Activated T-helper 2 cell treated with anti-CD3 and anti-CD28 coated beads, Interferon-gamma antibody, Interleukin-2, Interleukin-4, amounts not matched to agents 10 μg/mL and 5 μg/mL and 100 μg/mL, durations not matched to agents 14 hours and 24 hours and 36 hours (primary cell): ENCODE measurements at regions of chr7 and their contacts with region 1.

Region 1: DNA sequence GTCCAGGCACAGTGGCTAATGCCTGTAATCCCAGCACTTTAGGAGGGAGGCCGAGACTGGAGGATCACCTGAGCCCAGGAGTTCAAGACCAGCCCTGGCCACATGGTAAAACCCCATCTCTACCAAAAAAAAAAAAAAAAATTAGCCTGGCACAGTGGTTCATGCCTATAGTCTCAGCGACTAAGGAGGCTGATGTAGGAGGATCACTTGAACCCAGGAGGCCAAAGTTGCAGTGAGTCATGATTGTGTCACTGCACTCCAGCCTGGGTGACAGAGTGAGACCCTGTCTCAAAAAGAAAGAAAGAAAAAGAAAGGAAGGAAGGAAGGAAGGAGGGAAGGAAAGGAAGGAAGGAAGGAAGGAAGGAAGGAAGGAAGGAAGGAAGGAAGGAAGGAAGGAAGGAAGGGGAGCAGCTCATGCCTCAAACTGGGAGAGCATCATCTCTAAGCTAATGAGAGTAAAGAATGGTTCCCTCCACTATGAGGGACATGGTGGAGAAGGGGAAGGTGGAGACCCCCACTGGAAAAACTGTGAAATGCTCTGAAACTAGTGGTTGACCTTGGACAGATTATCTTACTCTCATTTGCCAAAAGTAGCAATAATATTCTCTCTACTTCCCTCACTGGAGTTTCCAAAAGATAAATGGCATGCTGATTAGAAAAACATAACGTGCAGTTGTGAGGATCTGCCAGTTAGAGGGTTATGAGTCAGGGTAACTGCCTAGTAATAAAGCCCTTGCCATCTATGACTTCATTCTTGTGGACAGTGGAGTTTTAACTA is 16.8 kb downstream of the GIMAP5 start:
- DNase-seq: no peak
- H3K4me3 Mint-ChIP-seq: no peak overlapping the region
- H3K27ac Mint-ChIP-seq: peak overlapping the region; percentile 93
- H3K4me1 Mint-ChIP-seq: peaks cover 48% of the 10 kb centered on the region
- H3K27me3 Mint-ChIP-seq: no peaks in the 10 kb centered on the region

Region 2: DNA sequence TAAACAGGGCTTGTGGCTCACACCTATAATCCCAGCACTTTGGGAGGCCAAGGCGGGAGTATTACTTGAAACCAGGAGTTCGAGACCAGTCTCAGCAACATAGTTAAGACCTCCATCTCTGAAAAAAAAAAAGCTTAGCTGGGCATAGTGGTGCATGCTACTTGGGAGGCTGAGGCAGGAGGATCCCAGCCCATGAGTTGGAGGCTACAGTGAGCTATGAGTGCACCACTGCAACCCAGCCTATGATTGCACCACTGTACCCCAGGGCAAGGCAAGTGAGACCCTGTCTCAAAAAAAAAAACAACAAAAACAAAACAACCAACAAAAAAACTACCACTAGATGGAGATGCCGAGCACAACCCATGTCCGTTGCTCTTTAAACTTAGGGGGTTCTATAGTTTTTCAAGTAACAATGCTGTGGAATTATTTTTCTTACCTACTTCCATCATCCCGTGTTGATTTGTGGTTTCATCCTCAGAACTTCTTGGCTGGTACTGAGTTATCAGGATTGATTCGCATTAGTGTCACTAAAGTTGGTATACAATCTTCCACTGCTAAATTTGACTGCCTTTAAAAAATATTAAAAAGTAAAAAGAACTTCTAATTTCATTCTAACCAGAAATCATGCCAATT is 397.6 kb before region 1 on chr7:
- intact Hi-C with region 1: loop called (anchors 5 kb)
- DNase-seq: no peak
- H3K4me3 Mint-ChIP-seq: no peak overlapping the region
- H3K27ac Mint-ChIP-seq: no peak overlapping the region
- H3K4me1 Mint-ChIP-seq: peaks cover 33% of the 10 kb centered on the region
- H3K27me3 Mint-ChIP-seq: peaks cover 11% of the 10 kb centered on the region

Region 3: DNA sequence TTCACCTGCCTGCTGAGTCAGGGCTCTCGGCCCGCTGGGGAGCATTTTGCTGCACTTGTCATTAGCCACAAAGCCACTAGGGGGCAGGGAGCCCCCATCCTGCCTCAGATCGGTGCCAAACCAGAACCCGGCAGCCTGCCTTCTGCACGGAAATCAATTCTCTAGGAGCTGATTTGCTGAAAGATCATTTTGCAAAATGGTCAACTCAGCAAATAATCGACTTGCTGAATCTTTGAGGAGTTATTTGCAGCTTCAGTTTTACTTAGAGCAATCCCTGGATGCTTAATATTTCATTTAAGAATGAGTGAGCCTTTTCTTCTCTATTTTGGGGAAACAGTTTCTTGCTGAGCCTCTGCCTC is 305.2 kb before region 1 on chr7:
- intact Hi-C with region 1: loop called (anchors 1 kb)
- DNase-seq: peak; percentile 81
- H3K4me3 Mint-ChIP-seq: peak overlapping the region; percentile 54
- H3K27ac Mint-ChIP-seq: peak overlapping the region; percentile 78
- H3K4me1 Mint-ChIP-seq: peaks cover 53% of the 10 kb centered on the region
- H3K27me3 Mint-ChIP-seq: no peaks in the 10 kb centered on the region

Region 4: GRCh38 chr7:150514748-150515222 is 239.2 kb before region 1 on chr7 and contains the start of gene GIMAP7:
- intact Hi-C with region 1: loop called (anchors 1 kb)
- DNase-seq: peak; percentile 63
- H3K4me3 Mint-ChIP-seq: peak within 1 kb of the TSS; percentile 89
- H3K27ac Mint-ChIP-seq: peak within 1 kb of the TSS; percentile 89
- H3K4me1 Mint-ChIP-seq: peaks cover 45% of the 10 kb centered on the region
- H3K27me3 Mint-ChIP-seq: no peaks in the 10 kb centered on the region
- total RNA-seq, gene GIMAP7: 22.6 and 24.1 TPM in 2 replicates

Region 5: DNA sequence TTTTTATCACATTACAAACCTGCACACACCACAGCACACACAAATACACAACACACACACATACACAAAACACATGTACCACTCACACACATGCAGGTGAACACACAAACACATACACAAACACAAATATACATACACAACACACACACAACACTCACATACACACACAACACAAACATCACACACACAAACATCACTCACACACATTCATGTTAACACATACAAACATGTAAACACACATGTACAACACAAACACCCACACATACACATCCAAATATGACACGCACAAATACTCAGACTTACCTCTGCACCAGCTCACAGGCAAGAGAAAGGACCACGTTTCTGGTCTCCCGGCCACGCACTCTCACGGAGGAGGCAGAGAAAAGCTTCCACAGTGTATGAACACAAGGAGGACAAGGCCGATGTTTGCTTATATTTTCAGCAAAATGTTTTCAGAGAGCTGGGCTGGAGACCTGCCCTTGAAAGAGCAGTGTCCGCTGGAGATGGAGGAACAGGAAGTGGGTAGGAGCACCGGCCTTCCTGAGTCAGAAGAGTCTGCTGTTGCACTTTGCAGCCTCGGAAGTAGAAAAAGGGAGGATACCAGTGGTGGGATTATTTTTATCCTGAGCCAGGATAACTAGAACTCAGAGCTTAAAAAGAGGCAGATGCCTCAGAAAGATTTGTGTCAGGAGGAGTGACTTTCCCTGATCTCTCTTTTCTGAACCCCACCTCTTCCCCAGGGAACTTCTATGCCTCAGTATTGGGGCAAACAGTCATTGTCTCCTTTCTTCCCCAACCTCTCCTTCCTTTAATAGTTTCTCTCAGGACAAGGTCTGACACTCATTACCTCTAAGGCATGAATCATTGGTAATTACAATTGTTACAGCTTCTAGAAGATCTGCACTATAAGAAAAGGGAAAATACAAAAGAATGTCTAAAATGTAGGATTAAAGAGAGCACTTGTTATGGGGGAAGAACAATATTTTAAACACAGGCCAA is 121.8 kb before region 1 on chr7 and contains the start of gene GIMAP6:
- intact Hi-C with region 1: loop called (anchors 1 kb)
- DNase-seq: no peak
- H3K4me3 Mint-ChIP-seq: peak within 1 kb of the TSS; percentile 90
- H3K27ac Mint-ChIP-seq: peak within 1 kb of the TSS; percentile 84
- H3K4me1 Mint-ChIP-seq: peaks cover 53% of the 10 kb centered on the region
- H3K27me3 Mint-ChIP-seq: no peaks in the 10 kb centered on the region
- total RNA-seq, gene GIMAP6: 25.8 and 29.4 TPM in 2 replicates

Region 6: DNA sequence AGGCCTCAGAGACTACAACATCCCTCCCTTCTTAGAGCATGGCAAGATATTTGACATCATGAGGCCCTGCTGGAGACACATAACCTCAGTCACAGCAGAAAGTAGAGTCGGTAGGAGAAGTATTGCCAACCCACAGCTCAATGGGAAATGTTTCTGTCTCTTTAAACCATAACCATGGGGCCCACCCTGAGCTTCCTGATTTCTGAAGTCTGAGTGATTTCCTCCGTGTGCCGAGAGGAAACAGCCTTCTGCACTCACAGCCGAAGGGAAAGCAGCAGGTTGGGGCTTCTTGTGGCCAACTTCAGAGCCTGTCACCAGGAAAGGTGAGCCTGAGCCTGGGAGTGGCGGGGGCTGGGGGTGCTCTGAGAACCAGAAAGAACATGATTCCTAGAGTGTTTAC is 37.6 kb before region 1 on chr7 and contains the start of gene GIMAP1:
- intact Hi-C with region 1: loop called (anchors 1 kb)
- DNase-seq: peak; percentile 48
- H3K4me3 Mint-ChIP-seq: peak within 1 kb of the TSS; percentile 94
- H3K27ac Mint-ChIP-seq: peak within 1 kb of the TSS; percentile 76
- H3K4me1 Mint-ChIP-seq: peaks cover 51% of the 10 kb centered on the region
- H3K27me3 Mint-ChIP-seq: no peaks in the 10 kb centered on the region
- total RNA-seq, gene GIMAP1: 3.9 and 4.5 TPM in 2 replicates

Region 7: DNA sequence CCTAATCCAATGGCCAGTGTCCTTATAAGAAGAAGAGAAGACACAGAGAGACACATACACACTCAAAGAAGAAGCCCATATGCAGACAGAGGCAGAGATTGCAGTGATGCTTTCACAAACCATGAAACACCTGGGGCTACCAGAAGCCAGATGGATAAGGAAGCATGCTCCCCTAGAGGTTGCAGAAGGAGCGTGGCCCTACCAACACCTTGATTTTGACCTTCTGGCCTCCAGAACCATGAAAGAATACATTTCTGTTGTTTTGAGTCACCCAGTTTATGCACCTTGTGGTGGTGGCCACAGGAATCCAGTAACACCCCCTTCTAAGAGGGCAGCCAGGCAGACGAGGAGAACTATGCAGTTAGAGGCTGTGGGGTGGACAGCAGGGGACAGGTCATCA is 141.8 kb after region 1 on chr7:
- intact Hi-C with region 1: no loop called
- DNase-seq: no peak
- H3K4me3 Mint-ChIP-seq: no peak overlapping the region
- H3K27ac Mint-ChIP-seq: no peak overlapping the region
- H3K4me1 Mint-ChIP-seq: peaks cover 4% of the 10 kb centered on the region
- H3K27me3 Mint-ChIP-seq: peaks cover 37% of the 10 kb centered on the region